ENCODE measurements at regions of chr17 and their contacts with region 1.

Region 1: DNA sequence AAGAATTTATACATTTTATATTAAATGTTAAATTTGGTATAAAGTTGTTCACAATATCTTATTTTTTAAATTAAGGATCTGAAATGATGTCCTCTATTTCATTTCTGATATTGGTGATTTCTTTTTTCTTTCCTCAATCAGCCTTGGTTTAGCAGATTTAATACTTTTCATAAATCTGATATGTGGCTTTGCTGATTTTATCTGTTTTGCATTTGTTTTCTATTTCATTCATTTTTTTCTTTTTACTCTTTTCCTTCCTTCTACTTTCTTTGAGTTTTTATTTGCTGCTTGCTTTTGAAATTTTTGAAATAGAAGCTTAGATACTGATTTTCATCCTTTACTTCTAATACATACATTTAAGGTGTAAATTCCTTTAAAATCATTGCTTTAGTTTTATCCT is 40.0 kb downstream of the TANC2 start:
- DNase-seq: no peak

Region 2: DNA sequence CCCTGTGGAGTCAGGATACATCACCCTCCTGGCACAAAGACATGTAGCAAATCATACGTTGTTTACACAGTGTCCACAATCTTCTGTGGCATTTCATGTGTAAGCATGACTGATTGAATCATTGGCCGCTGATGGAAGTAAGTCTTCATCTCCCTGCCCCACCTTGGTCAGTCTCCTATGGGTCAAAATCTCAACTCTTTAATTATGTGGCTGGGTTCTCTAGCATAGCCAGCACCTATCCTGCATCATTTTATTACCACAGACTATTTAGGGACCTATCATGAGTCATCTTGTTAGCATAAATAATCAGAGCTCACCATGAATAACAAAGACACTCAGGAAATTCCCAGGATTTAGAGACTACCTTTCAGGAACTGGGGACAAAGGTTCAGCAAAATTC is 24.1 kb before region 1 on chr17:
- intact Hi-C with region 1: loop called in 1 of 2 experiments (anchors 1 kb)
- DNase-seq: no peak

Region 3: GRCh38 chr17:63132459-63132911 is 126.4 kb after region 1 on chr17:
- intact Hi-C with region 1: no loop called
- DNase-seq: no peak

Measured in posterior vena cava (tissue), 2 donors.